HCT116 (cell line): ENCODE measurements at regions of chr1 and their contacts with region 1.

Region 1: GRCh38 chr1:231603598-231604275 is 22.9 kb upstream of the DISC1 start:
- DNase-seq: peak; percentile 51
- ATAC-seq: peak; percentile 85
- H3K4me3 ChIP-seq: peak overlapping the region; percentile 52 to 60
- H3K27ac ChIP-seq: no peak overlapping the region
- H3K4me1 ChIP-seq: peaks cover 0 to 12% of the 10 kb centered on the region in 2 experiments; a peak in 2 of 4 replicates
- H3K27me3 ChIP-seq: 0 out of 2 replicates have a peak, but pooled peaks cover 4% of the 10 kb centered on the region
- CTCF ChIP-seq: peak; percentile 69 to 84 (median 80)
- POLR2A ChIP-seq: no peak
- RAD21 ChIP-seq: peak; percentile 88

Region 2: GRCh38 chr1:230642263-230642959 is 961.3 kb before region 1 on chr1 and contains the start of gene COG2:
- CTCF ChIA-PET with region 1: no interaction called
- POLR2A ChIA-PET with region 1: no interaction called
- RAD21 ChIA-PET with region 1: no interaction called
- intact Hi-C with region 1: loop called (anchors 5 kb)
- DNase-seq: peak; percentile 85
- ATAC-seq: peak; percentile 95
- H3K4me3 ChIP-seq: peak within 1 kb of the TSS; percentile 96 to 98
- H3K27ac ChIP-seq: peak within 1 kb of the TSS; percentile 47
- H3K4me1 ChIP-seq: peaks cover 11 to 22% of the 10 kb centered on the region in 2 experiments; a peak in 3 of 4 replicates
- H3K27me3 ChIP-seq: peaks cover 16% of the 10 kb centered on the region; the same call in 1 of the 2 replicates
- CTCF ChIP-seq: peak; percentile 84 to 98 (median 95)
- POLR2A ChIP-seq: no peak
- RAD21 ChIP-seq: peak; percentile 62
- total RNA-seq, gene COG2: 28.6 TPM

Region 3: GRCh38 chr1:230797942-230798418 is 805.8 kb before region 1 on chr1:
- CTCF ChIA-PET with region 1: no interaction called
- POLR2A ChIA-PET with region 1: no interaction called
- RAD21 ChIA-PET with region 1: no interaction called
- intact Hi-C with region 1: loop called (anchors 5 kb)
- DNase-seq: peak; percentile 41
- ATAC-seq: peak; percentile 89
- H3K4me3 ChIP-seq: no peak overlapping the region
- H3K27ac ChIP-seq: no peak overlapping the region
- H3K4me1 ChIP-seq: no peaks in the 10 kb centered on the region
- H3K27me3 ChIP-seq: no peaks in the 10 kb centered on the region
- CTCF ChIP-seq: peak; percentile 59 to 93 (median 67)
- POLR2A ChIP-seq: no peak
- RAD21 ChIP-seq: peak; percentile 93

Region 4: DNA sequence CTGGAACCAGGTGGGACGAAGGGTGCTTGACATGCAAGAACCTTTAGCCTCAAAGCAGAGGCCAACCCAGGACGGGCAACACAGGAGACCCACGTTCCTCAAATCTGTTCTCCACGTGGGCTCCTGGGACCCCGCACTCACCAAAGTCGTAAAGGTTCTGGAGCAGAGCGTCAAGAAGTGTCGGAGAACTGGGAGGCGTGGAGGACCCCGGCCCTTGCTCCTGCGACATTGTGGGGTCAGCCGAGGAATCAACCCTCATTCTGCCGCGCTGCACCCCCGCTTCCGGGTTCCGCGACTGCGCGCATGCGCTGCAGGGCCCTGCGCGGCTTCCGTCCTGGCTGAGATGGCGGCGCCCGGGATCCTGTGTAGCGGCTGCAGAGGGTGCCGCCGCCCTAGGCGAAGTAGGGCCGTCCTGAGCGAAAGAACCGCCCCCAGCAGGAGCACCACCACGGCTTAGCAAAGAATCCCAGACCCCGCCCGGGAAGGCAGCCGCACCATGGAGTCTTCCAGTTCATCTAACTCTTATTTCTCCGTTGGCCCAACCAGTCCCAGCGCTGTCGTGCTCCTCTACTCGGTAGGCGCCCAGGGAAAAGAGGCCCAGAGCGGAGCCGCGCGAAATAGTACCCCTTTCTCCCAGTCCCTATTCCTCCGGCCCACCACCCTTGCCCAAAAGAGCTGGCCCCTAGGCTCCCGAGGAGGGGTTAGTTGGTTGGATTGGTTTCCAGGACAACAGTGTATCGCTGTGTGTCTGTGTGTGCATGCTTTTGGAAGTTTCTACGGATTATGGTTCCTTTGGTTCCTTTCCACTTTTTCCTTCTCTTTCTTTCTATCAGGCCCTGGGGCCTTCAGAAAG is 362.6 kb before region 1 on chr1 and contains the start of gene GNPAT:
- CTCF ChIA-PET with region 1: no interaction called
- POLR2A ChIA-PET with region 1: no interaction called
- RAD21 ChIA-PET with region 1: no interaction called
- intact Hi-C with region 1: loop called (anchors 10 kb)
- DNase-seq: peak; percentile 64
- ATAC-seq: peak; percentile 96
- H3K4me3 ChIP-seq: peak within 1 kb of the TSS; percentile 97
- H3K27ac ChIP-seq: peak within 1 kb of the TSS; percentile 77
- H3K4me1 ChIP-seq: peaks cover 17 to 24% of the 10 kb centered on the region in 2 experiments
- H3K27me3 ChIP-seq: no peaks in the 10 kb centered on the region
- CTCF ChIP-seq: no peak
- POLR2A ChIP-seq: peak; percentile 68
- RAD21 ChIP-seq: no peak
- total RNA-seq, gene GNPAT: 42.8 TPM

Region 5: DNA sequence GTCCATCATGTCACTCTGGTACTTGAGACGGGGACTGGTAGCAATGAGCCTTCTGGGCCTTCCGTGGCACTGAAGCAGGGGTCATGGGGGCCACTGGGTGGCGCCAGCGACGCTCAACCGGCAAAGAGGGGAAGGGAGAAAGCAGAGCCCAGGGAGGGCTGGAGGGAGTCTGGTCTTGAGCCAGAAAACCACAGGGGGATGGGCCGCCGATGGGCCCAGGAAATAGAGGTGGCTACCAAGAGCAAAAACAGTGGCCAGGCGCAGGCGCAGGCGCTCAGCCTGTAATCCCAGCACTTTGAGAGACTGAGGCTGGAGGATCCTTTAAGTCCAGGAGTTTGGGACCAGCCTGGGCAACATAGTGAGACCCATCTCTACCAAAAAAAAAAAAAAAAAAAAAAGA is 287.9 kb before region 1 on chr1:
- CTCF ChIA-PET with region 1: interaction called, 3 read pairs
- POLR2A ChIA-PET with region 1: no interaction called
- RAD21 ChIA-PET with region 1: no interaction called
- intact Hi-C with region 1: loop called (anchors 1 kb)
- DNase-seq: peak; percentile 44
- ATAC-seq: peak; percentile 99
- H3K4me3 ChIP-seq: no peak overlapping the region
- H3K27ac ChIP-seq: no peak overlapping the region
- H3K4me1 ChIP-seq: peaks cover 0 to 3% of the 10 kb centered on the region in 2 experiments; a peak in 2 of 4 replicates
- H3K27me3 ChIP-seq: no peaks in the 10 kb centered on the region
- CTCF ChIP-seq: peak; percentile 70 to 85 (median 80)
- POLR2A ChIP-seq: no peak
- RAD21 ChIP-seq: peak; percentile 80

Region 6: DNA sequence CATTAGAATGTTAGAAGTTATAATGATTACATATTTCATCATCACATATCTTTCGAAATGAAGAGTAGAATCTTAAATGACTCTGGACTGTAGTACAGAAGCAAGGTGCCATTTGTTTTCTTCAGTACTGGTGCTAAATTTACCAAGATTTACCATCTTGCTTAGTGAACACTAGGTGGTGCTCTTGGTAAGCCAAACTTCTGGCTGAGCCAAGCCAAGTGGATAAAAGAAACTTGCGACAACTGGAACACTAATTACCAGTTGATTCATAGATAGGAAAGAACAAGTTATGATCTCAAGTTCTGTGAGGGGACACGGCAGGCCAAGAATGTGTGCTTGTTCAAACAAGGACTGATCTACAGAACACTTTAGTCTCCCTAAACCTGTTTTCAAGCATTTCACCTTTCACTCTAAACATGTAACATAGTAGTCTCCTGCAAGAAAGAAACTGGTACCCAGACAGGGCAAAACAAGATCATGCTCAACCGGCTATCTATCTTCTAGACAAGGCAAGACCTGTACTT is 245.8 kb before region 1 on chr1:
- CTCF ChIA-PET with region 1: interaction called, 9 read pairs
- POLR2A ChIA-PET with region 1: no interaction called
- RAD21 ChIA-PET with region 1: no interaction called
- intact Hi-C with region 1: loop called (anchors 1 kb)
- DNase-seq: peak; percentile 48
- ATAC-seq: peak; percentile 88
- H3K4me3 ChIP-seq: no peak overlapping the region
- H3K27ac ChIP-seq: peak overlapping the region; percentile 25; the same call in 1 of the 2 replicates
- H3K4me1 ChIP-seq: peaks cover 0 to 3% of the 10 kb centered on the region in 2 experiments; a peak in 1 of 4 replicates
- H3K27me3 ChIP-seq: no peaks in the 10 kb centered on the region
- CTCF ChIP-seq: peak; percentile 65 to 87 (median 85)
- POLR2A ChIP-seq: no peak
- RAD21 ChIP-seq: peak; percentile 93

Region 7: DNA sequence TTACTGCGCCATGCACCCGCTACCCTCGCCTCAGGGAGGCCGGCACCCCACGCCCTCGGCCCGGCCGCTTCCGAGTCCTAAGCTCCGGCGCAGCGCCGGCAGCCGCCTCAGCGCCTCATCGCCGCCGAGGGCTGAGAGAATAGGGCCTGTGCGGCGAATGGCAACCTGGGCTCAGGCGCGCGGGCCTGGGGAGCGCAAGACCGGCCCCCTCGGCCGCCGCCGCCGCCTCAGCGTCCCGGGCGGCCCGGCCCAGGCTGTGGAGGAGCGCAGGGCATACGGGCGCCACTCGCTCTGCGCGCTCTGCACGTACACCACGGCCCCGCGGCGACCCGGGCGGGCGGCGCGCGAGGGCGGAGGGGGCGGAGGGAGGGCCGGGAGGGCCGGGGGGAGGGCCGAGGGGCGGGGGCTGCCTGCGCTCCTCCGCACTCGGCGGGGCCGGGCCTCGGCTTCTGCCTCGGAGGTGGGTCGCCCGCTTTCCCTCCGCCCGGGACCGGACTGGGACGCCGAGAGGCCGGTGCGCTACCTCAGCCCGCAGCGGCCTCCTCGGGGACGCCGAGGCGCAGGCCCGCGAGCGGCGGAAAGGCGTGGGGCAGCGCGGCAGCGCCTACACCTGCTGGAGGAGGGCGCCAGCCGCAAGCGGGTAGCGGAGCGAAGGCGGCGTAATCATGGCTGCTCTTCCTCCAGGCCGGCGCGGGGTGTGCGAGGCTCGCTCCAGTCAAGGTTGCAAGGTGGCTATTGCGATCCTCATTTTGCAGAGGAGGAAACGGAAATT is 181.6 kb before region 1 on chr1 and contains the start of gene EGLN1:
- CTCF ChIA-PET with region 1: no interaction called
- POLR2A ChIA-PET with region 1: no interaction called
- RAD21 ChIA-PET with region 1: no interaction called
- intact Hi-C with region 1: no loop called
- DNase-seq: peak; percentile 63
- ATAC-seq: peak; percentile 88
- H3K4me3 ChIP-seq: peak within 1 kb of the TSS; percentile 78 to 84
- H3K27ac ChIP-seq: peak within 1 kb of the TSS; percentile 90
- H3K4me1 ChIP-seq: peaks cover 18 to 43% of the 10 kb centered on the region in 2 experiments; a peak in 3 of 4 replicates
- H3K27me3 ChIP-seq: no peaks in the 10 kb centered on the region
- CTCF ChIP-seq: peak in 2 of 3 experiments; percentile 13 to 34; a peak in 1 of 6 replicates
- POLR2A ChIP-seq: peak; percentile 84
- RAD21 ChIP-seq: peak; percentile 63
- total RNA-seq, gene EGLN1: 27.1 TPM

Region 8: GRCh38 chr1:231887866-231888265 is 284.1 kb after region 1 on chr1:
- CTCF ChIA-PET with region 1: no interaction called
- POLR2A ChIA-PET with region 1: no interaction called
- RAD21 ChIA-PET with region 1: no interaction called
- intact Hi-C with region 1: no loop called
- DNase-seq: no peak
- ATAC-seq: no peak
- H3K4me3 ChIP-seq: no peak overlapping the region
- H3K27ac ChIP-seq: no peak overlapping the region
- H3K4me1 ChIP-seq: no peaks in the 10 kb centered on the region
- H3K27me3 ChIP-seq: peaks cover 8% of the 10 kb centered on the region; the same call in 1 of the 2 replicates
- CTCF ChIP-seq: no peak
- POLR2A ChIP-seq: no peak
- RAD21 ChIP-seq: no peak